Ovary (tissue), 10 donors: ENCODE measurements at regions of chr5 and their contacts with region 1.

Region 1: DNA sequence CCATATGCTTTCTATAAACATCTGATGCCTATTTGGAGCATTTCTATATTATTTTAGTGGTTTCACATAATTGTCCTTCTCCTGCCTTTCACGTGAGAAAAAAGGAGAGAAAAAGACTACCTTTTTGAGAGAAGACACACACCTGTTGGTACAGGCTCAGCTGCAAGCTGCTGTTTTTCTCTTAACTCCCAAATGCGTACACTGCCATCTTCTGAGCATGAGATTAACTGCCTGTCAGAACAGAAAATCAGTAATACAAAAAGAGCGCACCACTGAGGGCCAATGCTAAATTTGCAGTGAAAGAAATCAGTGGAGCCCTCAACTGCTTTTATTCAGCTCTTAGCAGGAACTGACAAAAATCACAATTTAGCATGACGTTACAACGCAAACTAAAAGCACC is 54.9 kb downstream of the WDR41 start:
- DNase-seq: no peak
- H3K4me3 ChIP-seq: no peak overlapping the region
- H3K27ac ChIP-seq: no peak overlapping the region
- H3K4me1 ChIP-seq: no peaks in the 10 kb centered on the region
- H3K27me3 ChIP-seq: no peaks in the 10 kb centered on the region
- CTCF ChIP-seq: no peak
- EP300 ChIP-seq: no peak
- POLR2A ChIP-seq: no peak

Region 2: DNA sequence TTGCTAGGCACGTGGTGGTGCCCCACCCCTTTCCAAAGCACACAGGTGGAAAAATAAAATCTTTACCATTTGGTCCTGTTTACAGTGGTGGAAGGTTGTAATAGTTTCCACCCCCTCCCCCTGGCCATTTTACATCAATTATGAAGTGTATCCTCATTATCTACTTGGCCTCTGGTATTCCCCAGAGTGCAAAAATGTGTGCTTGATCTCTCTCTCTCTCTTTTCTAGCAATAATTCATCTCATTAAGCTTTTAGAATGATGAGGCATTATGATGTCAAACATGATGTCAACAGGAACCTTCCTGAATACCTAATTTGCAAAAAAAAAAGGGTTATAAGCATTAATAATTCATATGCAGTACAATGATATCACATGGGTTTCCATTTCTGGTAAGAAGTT is 223.6 kb before region 1 on chr5:
- intact Hi-C with region 1: loop called in 1 of 4 experiments (anchors 1 kb)
- DNase-seq: no peak
- H3K4me3 ChIP-seq: no peak overlapping the region
- H3K27ac ChIP-seq: no peak overlapping the region
- H3K4me1 ChIP-seq: peaks cover 2% of the 10 kb centered on the region
- H3K27me3 ChIP-seq: no peaks in the 10 kb centered on the region
- CTCF ChIP-seq: no peak
- EP300 ChIP-seq: no peak
- POLR2A ChIP-seq: no peak